ENCODE measurements at regions of chr10 and their contacts with region 1.

Region 1: DNA sequence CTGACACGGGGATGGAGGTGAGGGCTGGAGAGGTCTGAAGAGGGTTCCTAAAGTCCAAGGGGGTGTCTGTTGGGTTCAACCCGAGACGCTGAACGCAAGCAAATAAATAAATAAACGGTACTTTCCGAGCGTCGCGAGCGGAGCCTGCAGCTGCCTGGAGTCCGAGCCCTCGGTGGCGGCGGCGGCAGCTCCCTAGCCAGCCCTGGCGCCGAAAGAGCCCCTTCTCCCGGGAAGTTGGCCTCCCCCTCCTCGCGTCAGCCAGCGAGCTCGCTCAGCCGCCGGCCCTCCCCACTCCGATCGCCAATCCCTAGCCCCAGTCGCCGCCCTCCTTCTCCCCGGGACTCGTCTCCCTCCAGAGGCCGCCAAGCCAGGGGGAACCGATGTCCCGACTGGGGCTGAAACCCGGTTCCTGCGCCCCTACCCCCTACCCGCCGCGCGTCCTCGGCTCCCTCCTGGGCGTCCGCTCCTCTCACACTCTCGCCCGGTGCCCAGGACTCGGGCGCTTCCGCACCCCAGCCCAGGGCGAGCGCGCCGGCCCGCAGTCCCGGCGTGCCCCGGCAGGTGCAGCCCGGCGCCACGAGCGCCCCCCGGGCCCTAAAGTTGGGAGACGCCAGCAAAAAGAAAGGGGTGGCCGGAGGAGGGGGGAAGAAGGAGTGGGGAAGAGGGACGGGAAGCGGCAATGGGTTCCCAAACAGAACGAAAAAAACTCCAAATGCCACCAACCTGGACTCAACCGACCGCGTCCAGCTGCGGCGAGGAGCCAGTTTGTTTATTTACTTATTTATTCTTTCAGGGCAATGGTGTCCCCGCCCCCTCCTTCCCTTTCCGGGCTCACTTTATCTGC is at the start of gene GFRA1:
- DNase-seq: peak in 5 of 10 donors; percentile 18 to 54 (median 35)
- H3K4me3 ChIP-seq: peak within 1 kb of the TSS; percentile 44 to 80 (median 60)
- H3K27ac ChIP-seq: peak within 1 kb of the TSS in 15 of 59 donors; percentile 20 to 71 (median 39)
- H3K27me3 ChIP-seq: peaks cover 0 to 93% (median 39%) of the 10 kb centered on the region in 45 donors
- CTCF ChIP-seq: no peak
- total RNA-seq, gene GFRA1: 5.6 to 32.6 (median 17.6) TPM

Region 2: DNA sequence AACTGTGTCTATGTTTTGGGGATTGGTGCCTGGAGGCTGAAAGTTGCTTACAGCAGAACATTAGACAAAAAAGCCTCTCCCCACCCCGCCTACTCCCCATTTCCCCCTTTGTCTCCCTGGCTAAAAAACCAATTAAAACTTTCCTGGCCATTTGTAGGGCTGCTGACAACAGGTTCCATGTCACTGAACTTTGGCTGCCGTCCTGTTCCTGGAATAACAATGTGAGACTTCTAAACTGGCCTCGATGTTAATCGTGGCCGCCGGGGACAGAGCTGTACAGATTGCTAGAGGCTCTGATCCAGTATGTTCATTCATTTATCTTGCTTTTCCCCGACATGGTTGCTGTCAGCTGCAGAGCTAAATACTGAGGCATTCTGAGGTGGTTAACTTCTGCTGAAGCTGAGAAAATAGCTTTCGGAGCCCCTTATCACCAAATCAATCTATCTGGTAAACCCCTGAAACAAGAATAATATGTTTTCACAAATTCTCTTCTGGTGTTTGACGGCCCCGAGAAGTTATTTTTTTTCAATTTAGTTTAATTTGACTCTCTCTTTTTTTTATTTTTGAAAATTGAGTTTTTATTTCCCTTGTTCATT is 271.3 kb before region 1 on chr10:
- intact Hi-C with region 1: no loop called
- DNase-seq: peak in 3 of 10 donors; percentile 24 to 36 (median 33)
- H3K4me3 ChIP-seq: peak overlapping the region in 4 of 59 donors; percentile 2 to 14 (median 5)
- H3K27ac ChIP-seq: no peak overlapping the region
- H3K27me3 ChIP-seq: peaks cover 0 to 34% (median 0%) of the 10 kb centered on the region in 45 donors
- CTCF ChIP-seq: no peak

Region 3: DNA sequence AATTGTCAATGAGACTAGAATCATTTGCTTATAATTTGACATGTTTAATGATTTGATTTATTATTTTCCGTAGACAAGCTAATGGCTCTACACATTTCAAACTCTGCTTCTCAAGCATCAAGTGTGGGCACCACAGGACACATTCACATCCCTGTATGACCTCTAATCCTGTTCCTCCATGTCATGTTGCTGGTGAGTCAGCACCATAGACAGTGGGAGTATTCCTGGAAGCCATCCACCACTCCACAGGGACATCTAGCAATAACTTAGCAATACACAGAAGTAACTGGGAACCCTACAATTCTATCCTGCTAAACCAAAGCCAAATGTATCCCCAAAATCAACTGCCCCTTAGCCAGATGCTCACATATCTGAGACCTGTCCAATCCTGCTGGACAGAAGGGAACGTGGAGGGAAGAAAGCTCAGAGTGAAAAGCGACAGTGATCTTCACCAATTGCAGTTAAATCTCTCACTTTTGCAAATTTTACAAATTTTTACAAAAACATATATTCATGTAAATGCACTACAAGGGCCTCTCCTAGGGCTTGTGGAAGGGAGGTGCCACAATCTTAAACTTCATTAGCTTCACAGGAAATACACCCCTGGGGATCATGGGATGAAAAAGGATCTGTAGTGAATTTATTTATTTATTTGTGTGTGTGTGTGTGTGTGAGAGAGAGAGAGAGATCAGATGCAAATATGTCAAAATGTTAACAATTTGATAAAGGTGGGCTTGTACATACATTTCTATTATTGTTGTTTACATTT is 126.1 kb before region 1 on chr10:
- intact Hi-C with region 1: loop called in 1 of 2 experiments (anchors 10 kb)
- DNase-seq: no peak
- H3K4me3 ChIP-seq: no peak overlapping the region
- H3K27ac ChIP-seq: no peak overlapping the region
- H3K27me3 ChIP-seq: peaks cover 0 to 19% (median 0%) of the 10 kb centered on the region in 45 donors
- CTCF ChIP-seq: no peak

Region 4: DNA sequence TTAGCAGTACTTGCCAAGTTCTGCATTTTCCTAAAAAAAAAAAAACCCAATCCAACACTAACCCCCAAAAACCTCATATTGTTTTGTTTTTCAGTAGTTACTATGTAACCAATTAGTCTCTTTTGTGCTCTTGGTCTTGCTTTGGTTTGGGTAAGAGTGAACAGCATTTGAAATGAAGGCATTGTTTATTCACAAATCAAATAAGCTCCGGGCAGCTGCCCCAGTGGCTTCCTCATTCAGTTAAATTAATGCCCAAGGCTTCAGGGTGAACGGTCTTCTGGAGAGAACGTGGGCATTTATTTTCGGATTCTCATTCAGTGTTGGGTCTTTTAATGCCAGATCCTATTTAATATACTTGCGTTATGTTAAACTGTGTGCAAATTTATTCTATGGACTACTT is 108.4 kb before region 1 on chr10:
- intact Hi-C with region 1: loop called in 1 of 2 experiments (anchors 5 kb)
- DNase-seq: peak in 3 of 10 donors; percentile 39 to 57 (median 46)
- H3K4me3 ChIP-seq: peak overlapping the region in 2 of 59 donors; percentile 4 to 10
- H3K27ac ChIP-seq: peak overlapping the region in 2 of 59 donors; percentile 4 to 33
- H3K27me3 ChIP-seq: no peaks in the 10 kb centered on the region
- CTCF ChIP-seq: no peak